GM12878 (cell line): ENCODE measurements at regions of chr1 and their contacts with region 1.

Region 1: GRCh38 chr1:88180449-88181108 is 503.5 kb upstream of the PKN2 start:
- DNase-seq: peak; percentile 35
- ATAC-seq: peak; percentile 100
- H3K4me3 ChIP-seq: no peak overlapping the region
- H3K27ac ChIP-seq: no peak overlapping the region
- H3K4me1 ChIP-seq: no peaks in the 10 kb centered on the region
- H3K27me3 ChIP-seq: no peaks in the 10 kb centered on the region; a peak in 1 of 4 replicates
- CTCF ChIP-seq: peak; percentile 91 to 96 (median 94)
- EP300 ChIP-seq: no peak
- POLR2A ChIP-seq: no peak
- RAD21 ChIP-seq: peak; percentile 84

Region 2: DNA sequence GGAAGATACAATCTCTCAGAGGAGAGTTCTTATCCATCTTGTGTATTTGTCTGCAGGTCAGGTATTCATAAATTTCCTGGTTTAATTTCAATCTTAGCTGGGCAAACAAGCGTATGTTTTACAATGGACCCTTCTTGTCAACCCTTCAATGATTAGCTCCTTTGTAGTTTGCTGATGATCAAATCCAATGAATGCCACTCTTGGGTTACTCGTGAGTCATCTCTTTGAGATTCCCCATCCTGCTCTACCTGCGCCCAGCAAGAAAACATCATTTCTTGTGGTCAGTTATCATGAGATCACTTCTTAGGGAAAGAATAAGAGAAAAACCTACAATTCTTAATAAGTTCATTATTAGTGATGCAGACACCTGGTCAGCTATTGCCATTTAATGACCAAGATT is 68.8 kb before region 1 on chr1:
- CTCF ChIA-PET with region 1: no interaction called
- POLR2A ChIA-PET with region 1: no interaction called
- RAD21 ChIA-PET with region 1: no interaction called
- SMC1A ChIA-PET with region 1: no interaction called
- in situ Hi-C with region 1: no loop called
- intact Hi-C with region 1: no loop called
- DNase-seq: no peak
- ATAC-seq: no peak
- H3K4me3 ChIP-seq: no peak overlapping the region
- H3K27ac ChIP-seq: no peak overlapping the region
- H3K4me1 ChIP-seq: no peaks in the 10 kb centered on the region
- H3K27me3 ChIP-seq: no peaks in the 10 kb centered on the region
- CTCF ChIP-seq: no peak
- EP300 ChIP-seq: no peak
- POLR2A ChIP-seq: no peak
- RAD21 ChIP-seq: no peak

Region 3: GRCh38 chr1:88163187-88163586 is 17.4 kb before region 1 on chr1:
- CTCF ChIA-PET with region 1: interaction called, 15 read pairs
- POLR2A ChIA-PET with region 1: no interaction called
- RAD21 ChIA-PET with region 1: no interaction called
- SMC1A ChIA-PET with region 1: interaction called, 3 read pairs
- in situ Hi-C with region 1: no loop called
- intact Hi-C with region 1: no loop called
- DNase-seq: no peak
- ATAC-seq: no peak
- H3K4me3 ChIP-seq: no peak overlapping the region
- H3K27ac ChIP-seq: no peak overlapping the region
- H3K4me1 ChIP-seq: no peaks in the 10 kb centered on the region
- H3K27me3 ChIP-seq: no peaks in the 10 kb centered on the region; a peak in 1 of 4 replicates
- CTCF ChIP-seq: no peak
- EP300 ChIP-seq: no peak
- POLR2A ChIP-seq: no peak
- RAD21 ChIP-seq: no peak

Region 4: GRCh38 chr1:88191917-88192316 is 11.3 kb after region 1 on chr1:
- CTCF ChIA-PET with region 1: interaction called, 35 read pairs
- POLR2A ChIA-PET with region 1: no interaction called
- RAD21 ChIA-PET with region 1: interaction called, 12 read pairs
- SMC1A ChIA-PET with region 1: interaction called, 11 read pairs
- in situ Hi-C with region 1: no loop called
- intact Hi-C with region 1: no loop called
- DNase-seq: peak; percentile 37
- ATAC-seq: peak; percentile 93
- H3K4me3 ChIP-seq: no peak overlapping the region
- H3K27ac ChIP-seq: no peak overlapping the region
- H3K4me1 ChIP-seq: peaks cover 4% of the 10 kb centered on the region; the same call in 1 of the 2 replicates
- H3K27me3 ChIP-seq: no peaks in the 10 kb centered on the region; a peak in 1 of 4 replicates
- CTCF ChIP-seq: no peak
- EP300 ChIP-seq: no peak
- POLR2A ChIP-seq: no peak
- RAD21 ChIP-seq: no peak

Region 5: DNA sequence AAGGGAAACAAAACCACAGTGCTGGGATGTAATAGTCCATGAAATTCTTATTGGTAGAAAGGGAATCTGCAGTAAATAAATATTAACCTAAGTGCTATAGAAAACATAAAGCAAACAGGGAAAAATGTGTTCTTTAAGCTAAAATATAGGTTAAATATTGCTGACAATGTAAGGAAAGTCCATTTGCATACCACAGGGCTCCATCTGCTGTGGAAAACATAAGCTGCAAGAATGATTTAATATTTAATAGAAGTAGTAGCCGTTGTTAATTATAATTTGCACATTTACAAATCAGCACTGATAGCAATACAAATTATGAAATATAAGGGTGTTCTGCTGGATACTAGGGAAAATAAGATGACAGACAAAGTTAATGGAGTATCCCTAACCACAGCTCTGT is 58.6 kb after region 1 on chr1:
- CTCF ChIA-PET with region 1: no interaction called
- POLR2A ChIA-PET with region 1: no interaction called
- RAD21 ChIA-PET with region 1: interaction called, 12 read pairs
- SMC1A ChIA-PET with region 1: interaction called, 6 read pairs
- in situ Hi-C with region 1: no loop called
- intact Hi-C with region 1: no loop called
- DNase-seq: no peak
- ATAC-seq: no peak
- H3K4me3 ChIP-seq: no peak overlapping the region
- H3K27ac ChIP-seq: no peak overlapping the region
- H3K4me1 ChIP-seq: no peaks in the 10 kb centered on the region
- H3K27me3 ChIP-seq: no peaks in the 10 kb centered on the region
- CTCF ChIP-seq: no peak
- EP300 ChIP-seq: no peak
- POLR2A ChIP-seq: no peak
- RAD21 ChIP-seq: no peak

Region 6: DNA sequence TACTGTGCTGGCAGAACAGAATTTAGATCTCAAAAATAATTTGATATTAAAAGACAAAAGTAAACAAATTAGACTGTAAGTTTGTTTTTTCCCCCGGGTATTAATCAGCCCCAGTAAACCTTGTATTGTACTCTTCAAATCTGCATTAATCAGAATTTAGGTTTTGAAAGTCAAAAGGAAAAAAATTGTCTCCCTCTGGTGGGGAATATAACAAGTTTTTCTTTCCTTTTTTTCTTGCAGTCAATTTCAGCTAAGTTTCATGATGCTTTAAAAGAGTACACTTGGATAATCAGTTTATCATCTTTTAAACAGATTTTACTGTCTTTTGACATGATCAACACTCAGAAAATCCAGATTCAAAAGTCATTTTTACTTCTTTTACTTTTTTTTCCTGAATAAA is 369.0 kb after region 1 on chr1:
- CTCF ChIA-PET with region 1: interaction called, 13 read pairs
- POLR2A ChIA-PET with region 1: no interaction called
- RAD21 ChIA-PET with region 1: interaction called, 11 read pairs
- SMC1A ChIA-PET with region 1: interaction called, 13 read pairs
- in situ Hi-C with region 1: no loop called
- intact Hi-C with region 1: no loop called
- DNase-seq: no peak
- ATAC-seq: no peak
- H3K4me3 ChIP-seq: no peak overlapping the region
- H3K27ac ChIP-seq: no peak overlapping the region
- H3K4me1 ChIP-seq: no peaks in the 10 kb centered on the region
- H3K27me3 ChIP-seq: peaks cover 0 to 1% of the 10 kb centered on the region in 2 experiments; a peak in 1 of 4 replicates
- CTCF ChIP-seq: no peak; a peak in 1 of 6 replicates
- EP300 ChIP-seq: no peak
- POLR2A ChIP-seq: no peak
- RAD21 ChIP-seq: no peak

Region 7: GRCh38 chr1:88867743-88868521 is 687.4 kb after region 1 on chr1:
- CTCF ChIA-PET with region 1: no interaction called
- POLR2A ChIA-PET with region 1: no interaction called
- RAD21 ChIA-PET with region 1: no interaction called
- SMC1A ChIA-PET with region 1: no interaction called
- in situ Hi-C with region 1: loop called (anchors 25 kb)
- intact Hi-C with region 1: no loop called
- DNase-seq: no peak
- ATAC-seq: peak; percentile 73
- H3K4me3 ChIP-seq: no peak overlapping the region
- H3K27ac ChIP-seq: peak overlapping the region; percentile 17; the same call in 1 of the 2 replicates
- H3K4me1 ChIP-seq: peaks cover 4% of the 10 kb centered on the region; the same call in 1 of the 2 replicates
- H3K27me3 ChIP-seq: no peaks in the 10 kb centered on the region
- CTCF ChIP-seq: no peak
- EP300 ChIP-seq: no peak
- POLR2A ChIP-seq: no peak
- RAD21 ChIP-seq: no peak